ENCODE measurements at regions of chr2 and their contacts with region 1.

Region 1: DNA sequence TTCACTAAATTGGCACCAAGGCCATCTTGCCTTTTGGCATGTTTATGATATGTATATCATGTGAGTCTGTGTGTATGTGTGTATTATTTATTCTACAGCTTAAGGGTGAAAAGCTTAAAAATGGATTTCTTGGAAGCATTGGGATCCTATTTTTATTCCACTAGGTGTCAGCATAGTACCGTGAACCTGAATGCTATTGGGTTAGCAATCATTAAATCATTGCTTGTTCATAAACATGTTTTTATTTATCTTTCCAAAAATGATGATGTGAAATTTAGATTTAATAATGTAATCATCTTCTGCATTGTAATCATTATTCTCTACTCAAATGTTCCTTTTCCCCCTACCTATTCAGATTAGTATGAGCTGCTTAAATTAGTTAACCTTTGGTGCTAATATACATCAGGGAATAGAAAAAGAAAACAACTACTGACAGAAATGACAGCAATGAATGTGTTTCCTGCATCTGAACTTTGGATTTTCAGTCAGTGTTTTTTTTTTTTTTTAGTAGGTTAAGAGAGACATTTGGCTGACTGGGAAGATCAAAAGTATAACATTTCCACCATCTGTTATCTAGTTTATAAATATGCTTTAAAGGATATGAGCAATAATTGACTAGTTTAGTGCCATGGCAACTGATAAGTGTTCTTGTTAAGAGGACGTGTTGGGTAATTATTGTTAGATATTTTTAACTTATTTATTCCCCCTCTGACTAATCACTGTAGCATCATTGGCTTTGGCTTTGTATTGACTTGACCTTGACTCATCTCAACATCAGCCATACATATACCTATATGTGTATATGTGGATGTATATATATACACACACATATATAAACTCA is 14.1 kb upstream of the ZSWIM2 start:
- DNase-seq: no peak
- H3K4me3 ChIP-seq: no peak overlapping the region
- H3K27me3 ChIP-seq: no peaks in the 10 kb centered on the region
- CTCF ChIP-seq: peak; percentile 63

Region 2: DNA sequence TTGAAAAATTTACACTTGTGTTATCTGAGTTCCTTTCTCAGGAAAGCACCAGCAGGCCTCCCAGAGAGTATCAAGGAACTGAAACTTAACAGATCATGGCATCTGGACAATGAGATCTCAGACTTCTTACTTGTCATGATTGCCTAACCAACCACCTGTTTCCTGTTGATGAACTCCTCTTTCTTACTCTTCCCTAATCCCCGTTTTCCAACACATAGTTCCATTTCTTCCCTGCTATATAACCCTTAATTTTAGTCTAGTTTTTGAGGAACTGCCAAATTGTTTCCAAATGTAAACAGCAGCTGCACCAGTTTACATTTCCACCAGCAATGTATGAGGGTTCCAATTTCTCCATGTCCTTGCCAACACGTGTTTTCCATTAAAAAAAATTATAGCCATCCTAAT is 175.3 kb before region 1 on chr2:
- CTCF ChIA-PET with region 1: no interaction called
- POLR2A ChIA-PET with region 1: no interaction called
- DNase-seq: no peak
- H3K4me3 ChIP-seq: no peak overlapping the region
- H3K27me3 ChIP-seq: no peaks in the 10 kb centered on the region
- CTCF ChIP-seq: no peak

Region 3: GRCh38 chr2:186991766-186992417 is 128.8 kb after region 1 on chr2:
- CTCF ChIA-PET with region 1: no interaction called
- POLR2A ChIA-PET with region 1: no interaction called
- DNase-seq: no peak
- H3K4me3 ChIP-seq: no peak overlapping the region
- H3K27me3 ChIP-seq: no peaks in the 10 kb centered on the region
- CTCF ChIP-seq: no peak

Region 4: DNA sequence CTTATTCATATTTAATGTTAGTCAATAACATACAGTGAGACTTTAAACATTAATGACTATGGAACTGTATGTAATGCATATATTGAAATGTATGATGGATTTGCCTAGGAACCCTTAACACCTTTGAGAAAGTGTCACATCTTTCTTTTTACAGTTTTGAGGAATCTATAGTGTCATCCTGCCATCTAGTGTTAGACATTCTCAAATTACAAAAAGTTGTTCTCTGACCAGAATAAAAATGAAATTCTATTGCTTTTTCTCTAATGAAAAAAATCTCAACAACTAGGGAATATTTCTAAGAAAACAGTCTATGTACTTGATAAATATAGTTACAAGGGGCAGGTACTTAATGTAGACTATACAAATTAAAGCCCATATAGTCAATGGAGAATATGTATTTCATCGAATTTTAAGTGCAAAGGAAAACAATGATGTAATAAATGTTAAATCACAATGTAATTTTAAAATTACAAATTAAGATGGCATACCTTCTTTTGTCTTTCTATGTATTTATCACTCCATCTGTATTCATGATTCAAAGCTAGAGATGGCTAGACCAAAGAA is 590.1 kb after region 1 on chr2:
- CTCF ChIA-PET with region 1: interaction called, 13 read pairs
- POLR2A ChIA-PET with region 1: no interaction called
- DNase-seq: no peak
- H3K4me3 ChIP-seq: no peak overlapping the region
- H3K27me3 ChIP-seq: no peaks in the 10 kb centered on the region
- CTCF ChIP-seq: peak; percentile 34; the same call in 1 of the 2 replicates

Measured in BJ (cell line).